ENCODE measurements at regions of chr1 and their contacts with region 1.

Region 1: DNA sequence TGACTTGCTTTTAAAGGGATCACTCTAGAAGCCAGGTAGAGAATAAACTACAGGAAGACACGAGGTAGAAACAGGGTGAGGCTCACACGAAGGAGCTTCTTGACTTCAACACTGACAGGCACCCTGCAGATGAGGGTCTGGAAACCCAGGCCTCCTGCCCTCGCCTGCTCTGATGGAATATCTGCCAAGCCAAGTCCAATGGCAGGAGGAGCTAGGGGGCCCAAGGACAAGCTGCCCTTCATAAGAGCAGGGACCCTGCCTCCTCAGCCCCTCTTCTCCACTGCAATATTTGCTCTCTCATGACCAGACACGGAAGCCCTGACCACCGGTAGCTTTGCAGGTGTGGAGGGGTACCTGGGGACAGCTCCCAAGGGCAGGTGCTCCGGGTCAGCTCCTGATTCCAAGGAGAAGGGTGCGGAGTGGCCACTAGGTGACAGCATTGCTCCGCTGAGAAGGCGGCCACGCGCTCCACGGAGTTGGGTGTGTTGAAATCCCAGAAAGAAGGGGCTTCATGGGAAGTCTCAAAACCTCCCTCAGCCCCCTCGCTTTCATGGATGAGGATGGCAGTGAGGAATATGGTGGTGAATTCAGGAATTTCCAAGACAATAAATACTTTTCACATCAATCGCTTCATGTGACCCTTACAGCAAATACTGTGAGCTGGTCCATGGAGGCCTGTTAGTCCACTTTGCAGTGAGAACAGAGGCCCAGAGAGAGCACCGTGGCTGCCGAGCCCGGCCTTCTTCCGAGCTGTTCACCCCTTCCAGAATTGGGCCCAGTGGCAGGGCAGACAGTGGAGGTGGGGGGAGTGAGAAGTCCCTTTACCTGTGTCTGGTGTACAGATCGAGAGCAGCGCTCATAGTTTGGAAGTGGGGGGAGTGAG is 33.2 kb upstream of the PAX7 start:
- DNase-seq: peak; percentile 47
- H3K4me3 ChIP-seq: no peak overlapping the region
- H3K27ac ChIP-seq: no peak overlapping the region
- H3K4me1 ChIP-seq: peaks cover 3% of the 10 kb centered on the region
- H3K27me3 ChIP-seq: no peaks in the 10 kb centered on the region
- CTCF ChIP-seq: peak; percentile 80 to 96 (median 91)
- POLR2A ChIP-seq: no peak

Region 2: DNA sequence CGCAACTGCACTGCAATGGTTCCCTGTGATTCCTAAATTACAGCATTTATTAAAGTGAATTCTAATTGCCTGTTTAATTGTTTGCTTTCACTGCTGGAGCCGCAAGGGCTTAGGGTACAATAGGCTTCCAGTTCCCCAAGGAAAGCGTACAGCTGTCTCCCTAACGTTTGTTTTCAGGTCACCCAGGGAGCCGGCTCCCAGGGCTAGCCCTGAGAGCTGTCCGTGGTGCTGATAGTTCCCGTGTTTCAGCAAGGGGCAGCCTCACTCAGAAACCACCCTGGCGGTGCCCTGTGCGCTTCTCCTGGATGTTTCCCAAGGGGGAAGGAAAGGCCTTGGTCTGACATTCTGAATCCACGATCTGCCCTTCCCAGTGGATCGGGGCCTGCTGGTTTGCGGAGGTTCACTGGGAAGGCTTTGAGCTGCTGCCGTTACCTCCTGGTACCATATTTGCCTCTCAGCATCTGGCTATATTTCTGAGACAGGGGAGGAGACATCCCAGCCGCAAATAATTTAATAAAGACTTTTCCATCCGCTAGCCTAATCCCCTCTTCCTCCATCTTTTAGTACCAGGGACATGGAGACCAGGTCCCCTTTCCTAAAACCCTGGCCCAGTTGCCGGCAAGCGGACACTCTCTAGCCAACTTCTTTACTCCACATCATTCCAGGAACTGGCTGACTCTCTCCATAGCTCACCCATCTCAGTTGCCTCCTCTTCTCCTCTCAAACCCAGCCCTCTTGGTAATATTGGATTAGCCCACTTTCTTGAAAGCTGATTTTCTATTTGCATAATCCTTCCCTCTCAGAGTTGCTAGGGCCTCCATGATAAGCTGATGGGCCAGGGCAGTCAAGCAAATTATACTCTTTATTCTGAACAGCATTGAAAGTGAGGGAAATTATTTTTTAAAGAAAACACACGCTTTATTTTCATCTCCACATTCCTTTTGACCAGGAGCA is 340.8 kb before region 1 on chr1:
- intact Hi-C with region 1: no loop called
- DNase-seq: peak; percentile 16
- H3K4me3 ChIP-seq: no peak overlapping the region
- H3K27ac ChIP-seq: no peak overlapping the region
- H3K4me1 ChIP-seq: no peaks in the 10 kb centered on the region
- H3K27me3 ChIP-seq: no peaks in the 10 kb centered on the region
- CTCF ChIP-seq: no peak
- POLR2A ChIP-seq: no peak

Region 3: GRCh38 chr1:18820791-18821641 is 223.6 kb after region 1 on chr1:
- intact Hi-C with region 1: loop called (anchors 1 kb)
- DNase-seq: peak; percentile 77
- H3K4me3 ChIP-seq: no peak overlapping the region
- H3K27ac ChIP-seq: no peak overlapping the region
- H3K4me1 ChIP-seq: no peaks in the 10 kb centered on the region
- H3K27me3 ChIP-seq: no peaks in the 10 kb centered on the region
- CTCF ChIP-seq: peak; percentile 83 to 91 (median 88)
- POLR2A ChIP-seq: no peak

Region 4: GRCh38 chr1:18875107-18875795 is 277.9 kb after region 1 on chr1:
- intact Hi-C with region 1: loop called (anchors 2 kb)
- DNase-seq: peak; percentile 75
- H3K4me3 ChIP-seq: no peak overlapping the region
- H3K27ac ChIP-seq: no peak overlapping the region
- H3K4me1 ChIP-seq: no peaks in the 10 kb centered on the region
- H3K27me3 ChIP-seq: no peaks in the 10 kb centered on the region
- CTCF ChIP-seq: peak; percentile 55 to 81 (median 76)
- POLR2A ChIP-seq: no peak

Measured in prostate gland (tissue), 2 donors.